RWPE1 (cell line): ENCODE measurements at regions of chr17 and their contacts with region 1.

Region 1: GRCh38 chr17:4789901-4790704 is 1.3 kb downstream of the GLTPD2 start:
- DNase-seq: peak; percentile 94
- H3K27ac ChIP-seq: peak overlapping the region; percentile 100
- CTCF ChIP-seq: peak; percentile 86

Region 2: GRCh38 chr17:4709794-4710692 is 80.1 kb before region 1 on chr17 and contains the start of gene ARRB2:
- CTCF ChIA-PET with region 1: interaction called, 19 read pairs
- POLR2A ChIA-PET with region 1: no interaction called
- DNase-seq: peak; percentile 97
- H3K27ac ChIP-seq: peak within 1 kb of the TSS; percentile 93
- CTCF ChIP-seq: peak; percentile 68

Region 3: DNA sequence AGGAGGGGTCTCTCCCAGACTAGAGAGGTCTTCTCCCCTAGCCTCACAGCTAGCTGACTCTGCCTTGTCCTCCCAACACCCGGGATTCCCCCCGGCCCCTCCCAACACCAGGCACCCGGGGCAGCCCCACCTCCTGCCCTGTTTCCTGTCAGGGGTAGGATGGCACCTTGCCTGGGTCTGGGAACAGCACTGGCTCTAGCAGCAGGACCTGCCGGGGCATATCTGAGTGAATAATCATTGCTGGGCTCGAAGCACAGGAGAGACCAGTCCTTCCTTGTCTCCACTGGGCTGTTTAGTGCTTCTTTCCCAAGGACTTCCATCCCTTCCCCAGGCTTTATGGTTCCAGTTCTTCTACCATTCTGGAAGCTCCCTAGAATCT is 68.8 kb after region 1 on chr17:
- CTCF ChIA-PET with region 1: interaction called, 10 read pairs
- POLR2A ChIA-PET with region 1: interaction called, 3 read pairs
- DNase-seq: peak; percentile 87
- H3K27ac ChIP-seq: peak overlapping the region; percentile 99
- CTCF ChIP-seq: no peak

Region 4: DNA sequence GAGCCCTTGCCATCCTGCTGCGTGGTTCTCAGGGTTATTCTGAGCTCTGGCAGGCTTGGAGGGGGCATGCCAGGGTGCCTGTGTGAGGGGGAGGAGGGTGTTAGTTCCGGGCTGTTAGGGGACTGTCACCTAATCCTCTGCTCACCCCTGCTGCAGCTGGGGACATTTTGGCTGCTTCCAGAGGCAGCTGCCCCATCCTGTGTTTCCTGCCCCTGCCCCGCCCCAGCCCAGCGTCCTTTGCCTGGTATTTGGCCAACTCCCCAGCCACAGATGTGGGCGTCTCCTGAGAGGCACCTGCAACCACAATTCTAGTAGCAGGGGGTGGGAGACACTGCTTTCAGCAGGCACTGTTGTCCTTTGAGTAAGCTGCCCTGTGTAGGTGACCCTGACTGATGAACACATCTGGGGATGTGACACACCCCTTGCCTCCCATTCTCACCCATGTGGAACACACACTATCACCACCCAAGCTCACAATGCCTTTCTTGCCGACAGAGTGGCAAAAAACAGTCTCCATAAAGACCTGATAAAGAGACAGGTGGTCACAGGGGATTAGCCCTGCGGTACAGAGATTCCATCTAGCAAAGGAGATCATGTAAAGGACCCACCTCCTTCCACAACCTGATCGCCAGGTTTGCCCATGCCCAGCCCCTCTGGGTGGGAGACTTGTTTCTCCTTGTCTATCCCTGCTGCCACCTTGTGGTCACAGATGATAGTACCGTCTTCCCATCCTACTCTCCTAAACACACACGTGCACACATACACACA is 113.1 kb after region 1 on chr17 and contains the start of gene CHRNE:
- CTCF ChIA-PET with region 1: interaction called, 11 read pairs
- POLR2A ChIA-PET with region 1: no interaction called
- DNase-seq: peak; percentile 50
- H3K27ac ChIP-seq: peak within 1 kb of the TSS; percentile 67
- CTCF ChIP-seq: peak; percentile 87